WTC11 (cell line): ENCODE measurements at regions of chr11 and their contacts with region 1.

Region 1: GRCh38 chr11:90218606-90219005 is 4.2 kb downstream of the CHORDC1 start:
- DNase-seq: peak; percentile 68
- ATAC-seq: peak; percentile 56
- H3K4me3 Mint-ChIP-seq: peak overlapping the region; percentile 12; the same call in 1 of the 2 replicates
- H3K27ac Mint-ChIP-seq: no peak overlapping the region
- H3K4me1 Mint-ChIP-seq: peaks cover 59% of the 10 kb centered on the region
- H3K27me3 Mint-ChIP-seq: no peaks in the 10 kb centered on the region
- CTCF ChIP-seq: no peak

Region 2: DNA sequence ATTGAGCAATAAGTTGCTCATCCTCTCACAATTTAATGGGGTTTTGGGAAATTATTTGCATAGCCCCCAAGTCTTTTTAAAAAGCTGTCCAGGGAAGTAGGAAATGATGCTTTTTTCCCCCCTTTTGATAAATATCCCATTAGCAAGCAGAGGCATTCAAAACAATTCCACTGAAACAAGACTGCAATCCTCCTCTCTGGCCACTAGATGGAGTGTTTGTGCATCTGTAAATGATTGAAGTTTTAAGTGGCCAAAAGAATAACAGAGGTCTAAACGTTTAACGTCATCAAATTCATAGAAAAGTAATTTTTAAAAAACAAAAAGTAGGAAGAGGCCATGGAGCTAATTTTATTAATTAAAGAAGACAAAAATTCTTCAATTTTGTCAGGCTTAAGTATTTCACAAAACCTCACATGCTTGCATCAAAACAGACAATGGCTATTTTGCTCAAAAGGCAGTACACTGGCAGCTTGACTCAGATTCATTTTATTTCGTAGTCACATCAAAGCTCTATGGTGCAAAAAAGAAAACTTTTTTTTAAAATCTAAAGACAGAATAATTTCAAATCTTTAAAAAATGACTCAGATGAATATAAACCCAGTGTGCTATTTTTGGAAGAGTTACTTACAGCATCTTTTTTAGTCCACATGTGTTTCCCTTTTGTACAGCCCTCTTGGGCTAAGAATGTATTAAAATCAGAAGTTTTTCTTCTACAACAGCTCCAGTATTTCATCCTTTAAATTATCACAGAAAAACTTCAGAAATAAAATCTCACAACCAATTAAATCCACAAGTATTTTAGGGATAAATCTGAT is 13.6 kb before region 1 on chr11:
- CTCF ChIA-PET with region 1: interaction called, 10 read pairs
- POLR2A ChIA-PET with region 1: no interaction called
- DNase-seq: no peak
- ATAC-seq: no peak; the same call in 1 of the 2 replicates
- H3K4me3 Mint-ChIP-seq: no peak overlapping the region
- H3K27ac Mint-ChIP-seq: peak overlapping the region; percentile 37; the same call in 1 of the 2 replicates
- H3K4me1 Mint-ChIP-seq: no peaks in the 10 kb centered on the region
- H3K27me3 Mint-ChIP-seq: no peaks in the 10 kb centered on the region
- CTCF ChIP-seq: peak; percentile 76